ENCODE measurements at regions of chr15 and their contacts with region 1.

Region 1: DNA sequence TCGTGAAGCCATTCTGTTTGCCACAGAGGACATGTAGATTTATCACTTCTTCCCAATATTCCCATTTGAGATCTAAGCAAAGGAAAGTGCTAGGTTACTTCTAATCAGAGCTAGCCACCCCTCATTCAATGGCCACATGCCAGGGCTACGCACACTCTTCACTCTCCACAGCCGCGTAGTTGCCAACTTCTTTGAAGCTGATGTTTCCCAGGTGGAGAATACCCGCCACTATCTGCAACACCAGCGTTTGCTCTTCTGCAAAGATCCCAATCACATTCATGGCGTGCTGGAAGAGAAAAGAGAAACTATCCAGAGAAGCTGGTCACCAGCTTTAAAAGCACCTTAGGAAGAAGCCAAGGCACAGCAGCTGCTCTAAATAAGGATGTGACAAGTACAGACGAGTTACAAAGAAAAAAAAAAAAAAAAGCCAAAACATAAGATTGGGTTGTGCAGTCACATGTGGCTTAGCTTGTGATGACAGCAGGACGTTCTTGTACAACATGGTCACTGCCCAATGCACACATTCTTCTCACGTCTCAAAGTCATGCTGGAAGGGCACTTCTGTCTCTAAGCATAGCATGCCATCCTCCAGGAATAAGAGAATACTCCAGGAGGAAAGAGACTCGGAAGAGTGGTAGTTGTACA is 16.4 kb downstream of the LDHAL6B start:
- DNase-seq: no peak
- H3K4me3 ChIP-seq: no peak overlapping the region
- H3K27ac ChIP-seq: no peak overlapping the region
- H3K4me1 ChIP-seq: no peaks in the 10 kb centered on the region
- H3K27me3 ChIP-seq: no peaks in the 10 kb centered on the region
- CTCF ChIP-seq: no peak

Region 2: GRCh38 chr15:59237119-59237855 is 14.3 kb after region 1 on chr15:
- CTCF ChIA-PET with region 1: no interaction called
- POLR2A ChIA-PET with region 1: interaction called, 24 read pairs
- intact Hi-C with region 1: no loop called
- DNase-seq: no peak
- H3K4me3 ChIP-seq: no peak overlapping the region
- H3K27ac ChIP-seq: no peak overlapping the region
- H3K4me1 ChIP-seq: no peaks in the 10 kb centered on the region
- H3K27me3 ChIP-seq: no peaks in the 10 kb centered on the region
- CTCF ChIP-seq: no peak

Region 3: DNA sequence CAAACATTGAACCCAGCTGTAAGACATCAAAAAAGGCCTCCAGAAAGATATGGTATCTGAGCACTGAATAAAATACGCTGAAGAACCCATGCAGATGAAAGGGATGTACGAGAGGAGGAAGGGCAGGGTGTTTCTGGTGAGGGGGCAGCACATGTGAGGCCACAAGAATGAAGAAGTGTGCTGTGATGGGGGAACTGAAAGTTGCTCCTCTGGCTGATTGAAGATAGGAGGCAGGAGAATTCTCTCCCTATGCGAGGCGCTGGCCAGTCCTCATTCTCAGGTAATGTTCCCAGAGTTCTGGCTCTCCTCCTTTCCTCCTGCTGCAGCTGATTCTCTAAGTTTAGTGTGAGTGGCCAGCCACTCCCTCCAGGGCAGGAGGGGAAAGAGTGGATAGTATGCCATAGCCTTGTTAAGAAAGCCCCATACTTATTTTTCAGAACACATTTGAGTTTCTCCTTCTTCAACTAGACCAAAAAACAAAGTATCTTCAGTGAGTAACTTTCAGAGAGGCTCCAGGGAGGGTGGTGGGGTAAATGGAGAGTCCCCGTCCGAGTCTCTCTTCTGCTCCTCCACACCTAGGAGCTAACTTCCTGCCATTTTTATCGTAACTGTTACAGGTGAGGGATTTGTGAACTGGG is 176.6 kb after region 1 on chr15:
- CTCF ChIA-PET with region 1: no interaction called
- POLR2A ChIA-PET with region 1: no interaction called
- intact Hi-C with region 1: no loop called
- DNase-seq: no peak
- H3K4me3 ChIP-seq: no peak overlapping the region
- H3K27ac ChIP-seq: no peak overlapping the region
- H3K4me1 ChIP-seq: peaks cover 4% of the 10 kb centered on the region; the same call in 1 of the 2 replicates
- H3K27me3 ChIP-seq: no peaks in the 10 kb centered on the region
- CTCF ChIP-seq: no peak

Region 4: GRCh38 chr15:59516655-59517461 is 293.8 kb after region 1 on chr15:
- CTCF ChIA-PET with region 1: no interaction called
- POLR2A ChIA-PET with region 1: interaction called, 14 read pairs
- intact Hi-C with region 1: no loop called
- DNase-seq: no peak
- H3K4me3 ChIP-seq: no peak overlapping the region
- H3K27ac ChIP-seq: no peak overlapping the region
- H3K4me1 ChIP-seq: no peaks in the 10 kb centered on the region
- H3K27me3 ChIP-seq: no peaks in the 10 kb centered on the region
- CTCF ChIP-seq: no peak